Gastrocnemius medialis (tissue), 4 donors: ENCODE measurements at regions of chr17 and their contacts with region 1.

Region 1: GRCh38 chr17:38498186-38498752 is 70.0 kb downstream of the ARHGAP23 start:
- DNase-seq: no peak
- ATAC-seq: no peak
- H3K4me3 ChIP-seq: no peak overlapping the region
- H3K27ac ChIP-seq: no peak overlapping the region
- H3K4me1 ChIP-seq: no peaks in the 10 kb centered on the region
- H3K27me3 ChIP-seq: no peaks in the 10 kb centered on the region
- CTCF ChIP-seq: no peak
- POLR2A ChIP-seq: no peak

Region 2: DNA sequence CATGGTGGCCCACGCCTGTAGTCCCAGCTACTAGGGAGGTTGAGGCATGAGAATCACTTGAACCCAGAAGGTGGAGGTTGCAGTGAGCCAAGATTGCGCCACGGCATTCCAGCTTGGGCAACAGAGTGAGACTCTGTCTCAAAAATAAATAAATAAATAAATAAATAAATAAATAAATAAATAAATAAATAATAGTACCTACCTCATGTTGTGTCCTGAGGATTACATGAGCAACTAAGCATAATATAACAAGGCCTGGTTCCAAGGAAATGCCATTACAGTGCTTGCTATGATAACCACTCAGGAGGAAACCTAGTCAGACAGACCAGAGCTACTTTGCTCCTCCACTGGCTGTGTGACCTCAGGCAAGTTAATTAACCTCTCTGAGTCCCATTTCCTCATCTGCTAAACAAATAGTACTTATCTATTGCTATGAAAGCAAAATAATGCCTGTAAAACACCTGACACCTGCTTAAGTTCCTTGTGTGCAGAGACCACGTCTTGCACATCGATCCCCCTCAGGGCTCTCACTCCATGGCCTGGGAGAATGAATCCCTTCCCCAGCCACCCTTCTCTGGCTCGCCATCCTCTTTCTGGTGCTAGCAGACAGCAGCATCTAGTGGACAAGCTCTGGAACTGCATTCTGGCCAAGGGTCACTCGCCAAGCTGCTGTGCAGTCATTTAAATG is 169.0 kb after region 1 on chr17:
- in situ Hi-C with region 1: loop called in 1 of 4 experiments (anchors 25 kb)
- intact Hi-C with region 1: loop called (anchors 10 kb)
- DNase-seq: peak; percentile 24 to 37
- ATAC-seq: peak; percentile 66 to 70
- H3K4me3 ChIP-seq: no peak overlapping the region
- H3K27ac ChIP-seq: no peak overlapping the region
- H3K4me1 ChIP-seq: no peaks in the 10 kb centered on the region
- H3K27me3 ChIP-seq: peaks cover 14 to 30% (median 28%) of the 10 kb centered on the region in 3 donors
- CTCF ChIP-seq: peak; percentile 83 to 98 (median 90)
- POLR2A ChIP-seq: no peak